Heart right ventricle (tissue), 16 donors: ENCODE measurements at regions of chr19 and their contacts with region 1.

Region 1: GRCh38 chr19:11137542-11138384 is 17.8 kb downstream of the SPC24 start:
- DNase-seq: peak; percentile 79 to 90
- ATAC-seq: peak; percentile 55 to 67 (median 59)
- H3K4me3 ChIP-seq: peak overlapping the region in 9 of 10 donors; percentile 4 to 46 (median 29)
- H3K27ac ChIP-seq: peak overlapping the region; percentile 84 to 97 (median 94)
- H3K4me1 ChIP-seq: peaks cover 25 to 65% (median 49%) of the 10 kb centered on the region in 9 donors
- H3K27me3 ChIP-seq: no peaks in the 10 kb centered on the region
- CTCF ChIP-seq: peak; percentile 68 to 92 (median 79)

Region 2: DNA sequence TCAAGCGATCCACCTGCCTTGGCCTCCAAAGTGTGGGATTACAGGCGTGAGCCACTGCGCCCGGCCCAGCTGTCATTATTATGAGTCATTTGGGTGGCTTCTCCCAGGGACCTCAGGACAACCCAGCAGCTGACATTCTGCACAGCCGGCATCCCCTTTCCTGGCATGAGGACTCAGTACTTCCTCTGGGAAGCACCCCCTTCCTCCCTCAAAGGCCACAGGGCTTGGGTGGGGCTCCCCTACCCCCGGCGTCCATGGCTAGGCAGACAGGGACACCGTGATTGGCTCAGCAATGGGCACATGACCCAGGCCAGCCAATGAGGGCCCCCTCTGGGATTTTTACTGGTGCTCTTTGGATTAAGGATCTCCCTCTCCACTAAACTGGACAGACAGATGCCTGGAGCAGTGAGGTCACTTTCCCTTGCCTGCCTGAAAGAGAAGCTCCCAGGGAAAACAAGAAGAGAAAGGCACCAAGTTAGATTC is 53.6 kb after region 1 on chr19:
- intact Hi-C with region 1: loop called in 3 of 10 experiments (anchors 2 kb)
- DNase-seq: peak; percentile 72 to 85
- ATAC-seq: peak; percentile 66 to 91 (median 76)
- H3K4me3 ChIP-seq: peak overlapping the region in 2 of 10 donors; percentile 3 to 7
- H3K27ac ChIP-seq: peak overlapping the region; percentile 9 to 97 (median 74)
- H3K4me1 ChIP-seq: peaks cover 31 to 93% (median 85%) of the 10 kb centered on the region in 9 donors
- H3K27me3 ChIP-seq: peaks cover 0 to under 1% (median 0%) of the 10 kb centered on the region in 7 donors
- CTCF ChIP-seq: no peak

Region 3: GRCh38 chr19:11203194-11204075 is 65.7 kb after region 1 on chr19:
- intact Hi-C with region 1: loop called in 9 of 10 experiments (anchors 1 to 5 kb)
- DNase-seq: peak; percentile 81 to 87
- ATAC-seq: peak; percentile 71 to 85 (median 78)
- H3K4me3 ChIP-seq: peak overlapping the region in 7 of 10 donors; percentile 2 to 37 (median 33)
- H3K27ac ChIP-seq: peak overlapping the region; percentile 81 to 94 (median 85)
- H3K4me1 ChIP-seq: peaks cover 13 to 43% (median 29%) of the 10 kb centered on the region in 9 donors
- H3K27me3 ChIP-seq: no peaks in the 10 kb centered on the region
- CTCF ChIP-seq: peak; percentile 82 to 92 (median 87)

Region 4: DNA sequence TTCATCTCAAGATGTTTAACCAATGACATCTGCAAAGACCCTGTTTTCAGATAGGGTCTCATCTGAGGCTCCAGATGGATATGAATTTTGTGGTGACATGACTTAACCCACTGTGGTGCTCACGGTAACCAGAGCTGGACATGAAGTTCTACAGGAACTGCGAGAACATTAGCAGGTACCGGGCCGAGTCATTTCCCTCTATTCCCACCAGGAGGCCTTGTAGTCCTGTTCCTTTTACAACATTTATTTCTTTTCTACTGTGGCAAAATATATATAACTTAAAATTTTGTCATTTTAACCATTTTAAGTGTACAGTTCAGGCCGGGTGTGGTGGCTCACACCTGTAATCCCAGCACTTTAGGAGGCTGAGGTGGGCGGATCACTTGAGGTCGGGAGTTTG is 150.6 kb after region 1 on chr19:
- intact Hi-C with region 1: loop called in 3 of 10 experiments (anchors 5 to 10 kb)
- DNase-seq: no peak
- ATAC-seq: no peak
- H3K4me3 ChIP-seq: no peak overlapping the region
- H3K27ac ChIP-seq: peak overlapping the region in 1 of 10 donors; percentile 76
- H3K4me1 ChIP-seq: peaks cover 0 to 34% (median 18%) of the 10 kb centered on the region in 9 donors
- H3K27me3 ChIP-seq: peaks cover 0 to 5% (median 0%) of the 10 kb centered on the region in 7 donors
- CTCF ChIP-seq: peak in 7 of 9 donors; percentile 23 to 51 (median 37)